Activated CD4-positive, alpha-beta T cell treated with anti-CD3 and anti-CD28 coated beads for 36 hours (primary cell): ENCODE measurements at regions of chr1 and their contacts with region 1.

Region 1: DNA sequence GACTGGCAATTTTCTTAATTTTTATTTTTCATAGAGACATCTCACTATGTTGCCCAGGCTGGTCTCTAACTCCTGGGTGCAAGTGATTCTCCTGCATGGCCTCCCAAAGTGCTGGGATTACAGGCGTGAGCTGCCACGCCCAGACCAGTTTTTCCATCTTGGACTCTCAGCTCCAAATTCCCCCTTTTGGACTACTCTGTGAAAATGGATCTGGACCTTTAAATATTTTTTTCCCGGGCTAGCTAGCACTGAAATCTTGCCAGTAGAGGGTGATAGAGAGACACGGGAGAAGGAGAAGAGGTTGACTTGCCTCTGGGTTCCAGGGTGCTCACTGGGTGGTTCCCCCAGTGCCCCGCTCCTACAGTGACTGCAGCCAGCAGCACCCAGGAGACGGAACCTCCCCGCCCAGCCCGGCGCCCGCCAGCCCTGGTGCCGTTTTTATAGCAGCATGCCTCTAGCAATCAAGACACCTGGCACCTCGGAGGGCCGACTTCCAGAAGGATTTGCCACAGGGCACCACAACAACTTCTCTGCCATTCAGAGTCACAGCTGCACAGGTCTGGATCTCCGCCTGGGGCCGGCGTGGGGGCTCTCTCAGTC is 34.7 kb upstream of the SCCPDH start:
- DNase-seq: peak; percentile 70
- ATAC-seq: peak; percentile 99
- H3K4me3 Mint-ChIP-seq: no peak overlapping the region
- H3K27ac Mint-ChIP-seq: no peak overlapping the region
- H3K4me1 Mint-ChIP-seq: no peaks in the 10 kb centered on the region
- H3K27me3 Mint-ChIP-seq: no peaks in the 10 kb centered on the region

Region 2: GRCh38 chr1:246753670-246754535 is 64.4 kb after region 1 on chr1:
- CTCF ChIA-PET with region 1: interaction called, 4 read pairs
- POLR2A ChIA-PET with region 1: no interaction called
- intact Hi-C with region 1: loop called in 1 of 2 experiments (anchors 1 kb)
- DNase-seq: peak; percentile 78
- ATAC-seq: peak; percentile 91
- H3K4me3 Mint-ChIP-seq: no peak overlapping the region
- H3K27ac Mint-ChIP-seq: no peak overlapping the region
- H3K4me1 Mint-ChIP-seq: no peaks in the 10 kb centered on the region
- H3K27me3 Mint-ChIP-seq: no peaks in the 10 kb centered on the region

Region 3: DNA sequence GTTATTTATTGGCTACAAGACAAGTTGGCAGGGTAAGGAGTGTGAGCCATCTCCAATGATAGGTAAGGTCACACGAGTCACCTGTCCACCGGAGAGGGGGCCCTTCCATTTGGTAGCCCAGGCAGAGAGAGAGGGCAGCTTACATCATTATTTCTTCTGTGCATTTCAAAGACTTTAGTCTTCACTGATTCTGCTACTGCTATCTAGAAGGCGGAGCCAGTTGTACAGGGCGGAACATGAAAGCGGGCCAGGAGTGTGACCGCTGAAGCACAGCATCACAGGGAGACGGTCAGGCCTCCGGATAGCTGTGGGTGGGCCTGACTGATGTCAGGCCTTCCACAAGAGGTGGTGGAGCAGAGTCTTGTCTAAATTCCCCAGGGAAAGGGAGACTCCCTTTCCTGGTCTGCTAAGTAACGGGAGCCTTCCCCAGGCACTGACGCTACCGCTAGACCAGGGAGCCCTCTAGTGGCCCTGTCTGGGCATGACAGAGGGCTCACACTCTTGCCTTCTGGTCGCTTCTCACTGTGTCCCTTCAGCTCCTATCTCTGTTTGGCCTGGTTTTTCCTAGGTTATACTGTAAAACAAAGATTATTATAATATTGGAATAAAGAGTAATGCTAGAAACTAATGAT is 281.7 kb after region 1 on chr1:
- CTCF ChIA-PET with region 1: interaction called, 6 read pairs
- POLR2A ChIA-PET with region 1: no interaction called
- intact Hi-C with region 1: loop called in 1 of 2 experiments (anchors 2 kb)
- DNase-seq: peak; percentile 71
- ATAC-seq: no peak
- H3K4me3 Mint-ChIP-seq: no peak overlapping the region
- H3K27ac Mint-ChIP-seq: no peak overlapping the region
- H3K4me1 Mint-ChIP-seq: no peaks in the 10 kb centered on the region
- H3K27me3 Mint-ChIP-seq: no peaks in the 10 kb centered on the region